Caki2 (cell line): ENCODE measurements at regions of chr18 and their contacts with region 1.

Region 1: GRCh38 chr18:6885992-6886796 is 156.7 kb downstream of the ARHGAP28 start:
- DNase-seq: peak; percentile 25

Region 2: GRCh38 chr18:6476190-6476589 is 410.0 kb before region 1 on chr18:
- in situ Hi-C with region 1: no loop called
- DNase-seq: no peak

Region 3: GRCh38 chr18:6543330-6543908 is 342.8 kb before region 1 on chr18:
- in situ Hi-C with region 1: loop called (anchors 25 kb)
- DNase-seq: peak; percentile 28